Right cardiac atrium (tissue), 5 donors: ENCODE measurements at regions of chr2 and their contacts with region 1.

Region 1: GRCh38 chr2:10141736-10142642 is 19.4 kb downstream of the RRM2 start:
- DNase-seq: peak in 2 of 3 donors; percentile 63 to 68
- ATAC-seq: peak; percentile 42 to 62
- H3K4me3 ChIP-seq: no peak overlapping the region
- H3K27ac ChIP-seq: no peak overlapping the region
- H3K4me1 ChIP-seq: no peaks in the 10 kb centered on the region
- H3K27me3 ChIP-seq: no peaks in the 10 kb centered on the region

Region 2: GRCh38 chr2:10302479-10303180 is 160.6 kb after region 1 on chr2 and contains the start of gene HPCAL1:
- intact Hi-C with region 1: loop called in 1 of 4 experiments (anchors 10 kb)
- DNase-seq: peak; percentile 88 to 96 (median 96)
- ATAC-seq: peak; percentile 90 to 93
- H3K4me3 ChIP-seq: peak within 1 kb of the TSS; percentile 76
- H3K27ac ChIP-seq: peak within 1 kb of the TSS; percentile 54
- H3K4me1 ChIP-seq: peaks cover 3% of the 10 kb centered on the region
- H3K27me3 ChIP-seq: no peaks in the 10 kb centered on the region
- total RNA-seq, gene HPCAL1: 18.5 to 32.2 (median 24.2) TPM